Heart right ventricle (tissue), 16 donors: ENCODE measurements at regions of chr2 and their contacts with region 1.

Region 1: DNA sequence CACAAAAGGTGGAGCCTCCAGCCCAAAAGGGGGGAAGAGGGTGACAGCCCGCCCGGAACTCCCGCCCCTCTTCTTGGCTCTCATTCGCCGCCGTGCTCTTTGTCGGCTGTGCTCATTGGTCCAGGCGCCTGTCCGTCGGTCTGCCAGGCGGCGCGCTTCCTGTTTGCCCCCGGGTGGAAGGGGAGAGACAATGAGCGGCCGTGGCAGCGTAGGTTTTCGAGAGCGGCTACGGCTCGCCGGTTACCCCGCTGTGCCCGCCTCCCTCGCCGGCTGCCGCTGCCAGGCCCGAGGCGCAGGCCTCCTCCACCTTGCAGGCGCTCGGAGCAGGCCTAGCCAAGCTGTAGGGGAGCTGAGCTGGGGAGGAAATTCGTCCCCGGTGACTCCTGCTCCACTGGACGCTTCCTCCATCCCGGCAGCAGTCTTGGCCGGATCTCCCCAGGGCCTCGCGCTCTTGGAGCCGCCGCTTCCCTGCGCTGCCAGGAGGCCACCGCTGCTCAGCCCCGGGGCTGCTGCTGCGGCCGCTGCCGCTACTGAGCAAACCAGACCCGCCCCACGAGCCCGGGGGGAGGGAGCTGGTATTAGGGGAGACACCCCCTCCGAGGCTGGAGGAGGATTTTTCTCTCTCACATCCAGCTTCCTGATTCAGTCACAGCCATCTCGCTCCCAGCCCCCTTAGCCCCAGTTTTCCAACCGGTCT is at the start of gene SP3:
- DNase-seq: peak; percentile 99
- ATAC-seq: peak; percentile 88 to 95 (median 95)
- H3K4me3 ChIP-seq: peak within 1 kb of the TSS; percentile 82 to 100 (median 96)
- H3K27ac ChIP-seq: peak within 1 kb of the TSS; percentile 99 to 100 (median 100)
- H3K4me1 ChIP-seq: peaks cover 6 to 48% (median 37%) of the 10 kb centered on the region in 9 donors
- H3K27me3 ChIP-seq: no peaks in the 10 kb centered on the region
- CTCF ChIP-seq: no peak
- total RNA-seq, gene SP3: 36.4 to 45.7 (median 41.0) TPM

Region 2: GRCh38 chr2:173752152-173752551 is 213.3 kb before region 1 on chr2:
- intact Hi-C with region 1: loop called in 1 of 10 experiments (anchors 10 kb)
- DNase-seq: no peak
- ATAC-seq: no peak
- H3K4me3 ChIP-seq: no peak overlapping the region
- H3K27ac ChIP-seq: no peak overlapping the region
- H3K4me1 ChIP-seq: peaks cover 0 to 15% (median 7%) of the 10 kb centered on the region in 9 donors
- H3K27me3 ChIP-seq: peaks cover 0 to 9% (median 0%) of the 10 kb centered on the region in 7 donors
- CTCF ChIP-seq: peak in 3 of 9 donors; percentile 14 to 30 (median 21)

Region 3: GRCh38 chr2:173903601-173904394 is 61.7 kb before region 1 on chr2:
- intact Hi-C with region 1: loop called in 1 of 10 experiments (anchors 10 kb)
- DNase-seq: no peak
- ATAC-seq: peak in 1 of 8 donors; percentile 19
- H3K4me3 ChIP-seq: no peak overlapping the region
- H3K27ac ChIP-seq: no peak overlapping the region
- H3K4me1 ChIP-seq: peaks cover 0 to 2% (median 0%) of the 10 kb centered on the region in 9 donors
- H3K27me3 ChIP-seq: no peaks in the 10 kb centered on the region
- CTCF ChIP-seq: no peak

Region 4: GRCh38 chr2:173990970-173991819 is 25.7 kb after region 1 on chr2:
- intact Hi-C with region 1: loop called in 2 of 10 experiments (anchors 2 kb)
- DNase-seq: peak; percentile 83 to 88
- ATAC-seq: peak; percentile 66 to 91 (median 72)
- H3K4me3 ChIP-seq: peak overlapping the region in 1 of 10 donors; percentile 6
- H3K27ac ChIP-seq: peak overlapping the region; percentile 45 to 87 (median 68)
- H3K4me1 ChIP-seq: peaks cover 28 to 70% (median 49%) of the 10 kb centered on the region in 9 donors
- H3K27me3 ChIP-seq: no peaks in the 10 kb centered on the region
- CTCF ChIP-seq: no peak

Region 5: DNA sequence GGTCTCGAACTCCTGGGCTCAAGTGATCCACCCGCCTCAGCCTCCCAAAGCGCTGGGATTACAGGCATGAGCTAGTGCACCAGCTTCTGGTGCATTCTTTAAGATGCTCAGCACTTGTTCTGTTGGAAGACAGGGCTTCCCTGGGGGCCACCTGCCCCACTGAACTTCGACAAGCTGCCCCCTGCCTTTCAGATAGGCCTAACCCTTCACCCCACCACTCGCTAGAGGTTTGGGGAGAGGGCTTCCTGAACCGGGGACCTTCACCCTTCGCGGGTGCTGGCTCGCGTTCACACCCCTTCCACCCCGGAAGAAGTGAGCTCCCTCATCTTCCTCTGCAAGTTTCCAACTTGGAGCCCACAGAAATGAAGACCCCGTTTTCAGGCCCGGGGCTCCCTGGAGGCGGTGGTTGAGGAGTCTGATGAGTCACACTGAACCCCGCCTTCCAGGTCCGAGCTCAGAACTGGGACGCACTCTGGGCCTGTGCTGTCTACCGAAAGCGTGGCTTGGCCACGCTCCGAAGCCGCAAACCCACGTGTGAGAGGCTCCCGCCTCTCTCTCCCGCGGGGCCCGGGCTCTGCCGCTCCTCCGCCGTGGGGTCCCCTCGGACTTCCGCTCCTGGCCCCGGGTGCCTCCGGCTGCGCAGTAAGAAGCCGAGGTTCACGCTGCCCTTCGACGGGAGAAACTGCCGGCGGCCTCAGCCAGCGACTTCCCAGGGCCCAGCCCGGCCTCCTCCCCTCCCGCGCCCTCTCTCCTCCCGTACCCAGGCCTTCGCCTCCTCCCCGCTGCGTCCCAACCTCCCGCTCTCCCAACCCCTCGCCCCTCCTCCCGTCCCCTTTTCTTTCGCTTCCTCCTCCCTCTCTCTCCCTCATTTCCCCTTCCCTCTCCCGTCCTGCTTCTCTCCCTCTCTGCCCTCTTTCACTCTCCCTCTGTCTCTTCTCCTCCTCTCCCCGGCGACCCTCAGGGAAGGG is 47.2 kb after region 1 on chr2:
- intact Hi-C with region 1: loop called in 1 of 10 experiments (anchors 5 kb)
- DNase-seq: peak; percentile 81 to 82
- ATAC-seq: peak; percentile 86 to 94 (median 90)
- H3K4me3 ChIP-seq: peak overlapping the region in 9 of 10 donors; percentile 35 to 59 (median 54)
- H3K27ac ChIP-seq: peak overlapping the region; percentile 72 to 96 (median 88)
- H3K4me1 ChIP-seq: peaks cover 0 to 52% (median 26%) of the 10 kb centered on the region in 9 donors
- H3K27me3 ChIP-seq: no peaks in the 10 kb centered on the region
- CTCF ChIP-seq: no peak

Region 6: GRCh38 chr2:174023591-174024523 is 58.4 kb after region 1 on chr2:
- intact Hi-C with region 1: loop called in 2 of 10 experiments (anchors 2 to 5 kb)
- DNase-seq: peak; percentile 48 to 50
- ATAC-seq: peak; percentile 8 to 76 (median 47)
- H3K4me3 ChIP-seq: peak overlapping the region in 1 of 10 donors; percentile 14
- H3K27ac ChIP-seq: peak overlapping the region; percentile 72 to 92 (median 88)
- H3K4me1 ChIP-seq: peaks cover 13 to 88% (median 52%) of the 10 kb centered on the region in 9 donors
- H3K27me3 ChIP-seq: no peaks in the 10 kb centered on the region
- CTCF ChIP-seq: no peak

Region 7: GRCh38 chr2:174039551-174040416 is 74.3 kb after region 1 on chr2:
- intact Hi-C with region 1: loop called in 7 of 10 experiments (anchors 1 to 10 kb)
- DNase-seq: peak; percentile 82 to 92
- ATAC-seq: peak; percentile 84 to 95 (median 88)
- H3K4me3 ChIP-seq: peak overlapping the region in 5 of 10 donors; percentile 7 to 29 (median 23)
- H3K27ac ChIP-seq: peak overlapping the region; percentile 68 to 95 (median 83)
- H3K4me1 ChIP-seq: peaks cover 10 to 63% (median 41%) of the 10 kb centered on the region in 9 donors
- H3K27me3 ChIP-seq: no peaks in the 10 kb centered on the region
- CTCF ChIP-seq: peak; percentile 79 to 96 (median 89)